ENCODE measurements at regions of chr4 and their contacts with region 1.

Region 1: GRCh38 chr4:142353149-142353738 is 492.9 kb downstream of the INPP4B start:
- DNase-seq: peak; percentile 69
- ATAC-seq: peak; percentile 70
- H3K4me3 ChIP-seq: no peak overlapping the region
- H3K27ac ChIP-seq: peak overlapping the region; percentile 21; the same call in 1 of the 2 replicates
- H3K4me1 ChIP-seq: peaks cover 31 to 35% of the 10 kb centered on the region in 2 experiments
- H3K27me3 ChIP-seq: no peaks in the 10 kb centered on the region
- CTCF ChIP-seq: peak; percentile 67 to 93 (median 77)
- POLR2A ChIP-seq: no peak
- RAD21 ChIP-seq: peak; percentile 87

Region 2: GRCh38 chr4:142095886-142096605 is 257.2 kb before region 1 on chr4:
- CTCF ChIA-PET with region 1: no interaction called
- POLR2A ChIA-PET with region 1: no interaction called
- RAD21 ChIA-PET with region 1: no interaction called
- intact Hi-C with region 1: no loop called
- DNase-seq: peak; percentile 90
- ATAC-seq: peak; percentile 84
- H3K4me3 ChIP-seq: peak overlapping the region in 1 of 2 experiments; percentile 8; a peak in 1 of 4 replicates
- H3K27ac ChIP-seq: peak overlapping the region; percentile 63; the same call in 1 of the 2 replicates
- H3K4me1 ChIP-seq: peaks cover 17 to 52% of the 10 kb centered on the region in 2 experiments
- H3K27me3 ChIP-seq: no peaks in the 10 kb centered on the region
- CTCF ChIP-seq: no peak
- POLR2A ChIP-seq: no peak
- RAD21 ChIP-seq: 0 out of 2 replicates have a peak, but pooled peaks have one; percentile 22

Region 3: GRCh38 chr4:142405021-142405694 is 51.9 kb after region 1 on chr4:
- CTCF ChIA-PET with region 1: no interaction called
- POLR2A ChIA-PET with region 1: no interaction called
- RAD21 ChIA-PET with region 1: no interaction called
- intact Hi-C with region 1: loop called (anchors 2 kb)
- DNase-seq: no peak
- ATAC-seq: peak; percentile 63
- H3K4me3 ChIP-seq: peak overlapping the region; percentile 61 to 63
- H3K27ac ChIP-seq: peak overlapping the region; percentile 88
- H3K4me1 ChIP-seq: peaks cover 65 to 75% of the 10 kb centered on the region in 2 experiments
- H3K27me3 ChIP-seq: no peaks in the 10 kb centered on the region
- CTCF ChIP-seq: no peak
- POLR2A ChIP-seq: peak; percentile 39
- RAD21 ChIP-seq: no peak

Region 4: DNA sequence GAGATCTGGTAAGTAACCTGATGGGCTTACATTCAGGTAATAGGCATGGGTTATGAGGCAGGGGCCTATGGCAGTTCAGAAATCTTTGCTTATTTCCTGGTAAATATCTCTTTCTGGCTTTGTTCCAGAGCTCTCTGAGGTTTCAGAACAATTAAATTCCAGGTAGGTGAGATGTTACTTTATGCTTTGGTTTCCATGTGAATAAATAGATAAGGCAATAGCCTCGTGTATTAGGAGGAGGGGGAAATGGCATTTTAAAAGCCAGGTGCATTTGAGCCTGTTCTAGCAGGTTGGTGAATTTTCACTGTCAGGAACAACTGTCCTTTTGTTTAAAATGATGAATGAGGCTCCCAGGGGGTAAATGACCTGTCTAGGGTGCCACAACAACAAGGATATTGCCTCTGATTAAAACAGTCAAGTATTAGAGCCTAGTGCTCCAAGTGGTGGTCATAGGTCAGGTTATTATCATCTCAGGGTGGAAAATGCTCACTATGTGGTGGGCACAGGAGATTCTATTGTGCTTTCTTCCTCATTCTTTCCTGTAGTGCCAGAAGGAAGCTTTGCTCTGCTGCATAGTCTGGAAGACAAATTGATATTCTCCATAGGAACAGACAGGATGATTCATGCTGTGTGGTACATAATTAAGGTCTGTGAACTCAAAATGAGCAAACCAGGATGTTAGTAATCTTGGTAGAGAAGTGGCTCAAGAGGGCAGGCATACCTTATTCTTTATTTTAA is 196.7 kb after region 1 on chr4:
- CTCF ChIA-PET with region 1: no interaction called
- POLR2A ChIA-PET with region 1: no interaction called
- RAD21 ChIA-PET with region 1: no interaction called
- intact Hi-C with region 1: loop called (anchors 5 kb)
- DNase-seq: peak; percentile 97
- ATAC-seq: peak; percentile 87
- H3K4me3 ChIP-seq: 0 out of 4 replicates have a peak overlapping the region, but pooled peaks of 1 of the 2 experiments have one; percentile 9
- H3K27ac ChIP-seq: peak overlapping the region; percentile 92
- H3K4me1 ChIP-seq: peaks cover 38 to 52% of the 10 kb centered on the region in 2 experiments
- H3K27me3 ChIP-seq: no peaks in the 10 kb centered on the region
- CTCF ChIP-seq: no peak
- POLR2A ChIP-seq: no peak
- RAD21 ChIP-seq: peak; percentile 28; the same call in 1 of the 2 replicates

Region 5: DNA sequence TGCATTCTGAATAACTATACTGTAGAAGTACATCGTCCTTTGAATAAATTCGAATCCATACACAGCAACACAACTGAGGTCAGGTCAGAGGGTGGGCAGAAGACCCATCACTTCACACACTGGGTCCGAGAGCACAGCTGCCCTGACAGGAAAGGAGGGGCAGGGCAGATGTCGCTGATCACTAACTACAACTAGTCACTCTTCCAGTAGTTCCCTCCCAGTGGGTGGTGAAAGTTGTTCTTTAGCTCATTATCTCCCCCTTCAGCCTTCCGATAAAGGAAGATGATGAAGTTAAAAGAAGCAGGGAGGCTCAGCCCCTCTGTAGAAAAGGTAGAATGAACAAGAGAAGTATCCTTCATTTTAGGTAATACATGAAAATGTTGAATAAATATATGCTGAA is 214.0 kb after region 1 on chr4:
- CTCF ChIA-PET with region 1: no interaction called
- POLR2A ChIA-PET with region 1: no interaction called
- RAD21 ChIA-PET with region 1: no interaction called
- intact Hi-C with region 1: loop called (anchors 5 kb)
- DNase-seq: peak; percentile 51
- ATAC-seq: peak; percentile 92
- H3K4me3 ChIP-seq: no peak overlapping the region; a peak in 1 of 4 replicates
- H3K27ac ChIP-seq: peak overlapping the region; percentile 54; the same call in 1 of the 2 replicates
- H3K4me1 ChIP-seq: peaks cover 13 to 32% of the 10 kb centered on the region in 2 experiments; a peak in 3 of 4 replicates
- H3K27me3 ChIP-seq: no peaks in the 10 kb centered on the region
- CTCF ChIP-seq: peak; percentile 19 to 29 (median 22); a peak in 3 of 6 replicates
- POLR2A ChIP-seq: no peak
- RAD21 ChIP-seq: peak; percentile 68

Region 6: DNA sequence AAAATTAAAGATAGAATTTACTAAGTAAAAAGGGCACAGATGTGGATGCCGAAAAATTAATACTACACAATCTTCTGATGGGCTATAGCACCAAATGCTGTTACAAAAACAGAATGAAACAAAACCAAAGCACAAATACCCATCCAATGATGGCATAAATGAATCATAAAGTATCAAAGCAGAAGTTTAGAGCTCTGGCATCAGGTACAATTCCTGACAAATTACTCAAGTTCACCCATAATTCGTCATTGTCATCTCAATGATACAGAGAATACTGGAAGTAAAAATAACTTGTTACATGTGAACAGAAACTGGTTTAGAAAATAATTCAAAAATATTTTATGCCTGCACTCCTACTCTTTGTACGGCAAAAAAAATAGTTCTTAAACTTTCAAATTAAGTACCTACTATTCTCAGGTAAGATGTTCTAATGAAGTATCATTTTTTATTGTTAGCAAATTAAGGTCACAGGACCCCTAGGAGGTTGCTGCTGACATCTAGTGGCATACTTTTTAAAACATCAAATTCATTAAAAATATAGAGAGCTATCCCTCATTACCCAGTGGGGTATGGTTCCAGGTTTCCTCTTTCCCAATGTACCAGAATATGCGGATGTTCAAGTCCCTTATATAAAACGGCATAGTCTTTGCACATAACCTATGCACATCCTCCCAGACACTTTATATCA is 366.8 kb after region 1 on chr4:
- CTCF ChIA-PET with region 1: interaction called, 9 read pairs
- POLR2A ChIA-PET with region 1: no interaction called
- RAD21 ChIA-PET with region 1: no interaction called
- intact Hi-C with region 1: loop called (anchors 1 kb)
- DNase-seq: peak; percentile 68
- ATAC-seq: peak; percentile 81
- H3K4me3 ChIP-seq: no peak overlapping the region
- H3K27ac ChIP-seq: peak overlapping the region; percentile 65; the same call in 1 of the 2 replicates
- H3K4me1 ChIP-seq: peaks cover 21 to 32% of the 10 kb centered on the region in 2 experiments
- H3K27me3 ChIP-seq: no peaks in the 10 kb centered on the region
- CTCF ChIP-seq: peak; percentile 33 to 72 (median 58); a peak in 5 of 6 replicates
- POLR2A ChIP-seq: no peak
- RAD21 ChIP-seq: peak; percentile 82